Activated T-helper 1 cell treated with anti-CD3 and anti-CD28 coated beads, Interleukin-12 subunit alpha, Interleukin-12 subunit beta, Interleukin-2, Interleukin-4 antibody, amounts not matched to agents 30 ng/mL and 10 ng/mL and 1 ng/mL, durations not matched to agents 14 hours and 24 hours and 36 hours (primary cell): ENCODE measurements at regions of chr22 and their contacts with region 1.

Region 1: DNA sequence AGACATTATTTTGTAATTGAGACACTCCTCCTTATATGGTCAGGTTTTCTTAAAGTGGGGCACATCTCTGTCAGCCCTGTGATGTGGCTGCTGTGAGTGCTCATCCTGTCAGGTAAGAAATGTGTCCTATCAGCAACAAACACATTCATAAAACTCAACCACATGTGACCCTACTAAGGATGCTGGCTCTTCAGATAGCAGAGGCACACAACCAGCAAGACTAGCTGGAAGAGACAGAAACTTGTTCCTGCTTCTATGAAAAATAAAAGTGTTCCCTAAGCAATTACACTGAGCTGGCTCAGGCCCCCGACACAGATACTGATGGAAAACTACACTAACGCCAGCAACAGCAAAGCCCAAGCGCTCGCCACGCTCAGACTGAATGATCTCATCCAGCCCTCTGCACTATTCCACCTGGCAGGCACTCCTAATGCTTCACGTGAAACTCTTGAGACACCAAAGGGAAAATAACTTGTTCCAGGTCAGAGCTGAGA is 49.8 kb upstream of the CYP2D6 start:
- DNase-seq: peak; percentile 32
- H3K4me3 Mint-ChIP-seq: peak overlapping the region; percentile 12
- H3K27ac Mint-ChIP-seq: peak overlapping the region; percentile 50
- H3K4me1 Mint-ChIP-seq: peaks cover 84% of the 10 kb centered on the region
- H3K27me3 Mint-ChIP-seq: no peaks in the 10 kb centered on the region

Region 2: DNA sequence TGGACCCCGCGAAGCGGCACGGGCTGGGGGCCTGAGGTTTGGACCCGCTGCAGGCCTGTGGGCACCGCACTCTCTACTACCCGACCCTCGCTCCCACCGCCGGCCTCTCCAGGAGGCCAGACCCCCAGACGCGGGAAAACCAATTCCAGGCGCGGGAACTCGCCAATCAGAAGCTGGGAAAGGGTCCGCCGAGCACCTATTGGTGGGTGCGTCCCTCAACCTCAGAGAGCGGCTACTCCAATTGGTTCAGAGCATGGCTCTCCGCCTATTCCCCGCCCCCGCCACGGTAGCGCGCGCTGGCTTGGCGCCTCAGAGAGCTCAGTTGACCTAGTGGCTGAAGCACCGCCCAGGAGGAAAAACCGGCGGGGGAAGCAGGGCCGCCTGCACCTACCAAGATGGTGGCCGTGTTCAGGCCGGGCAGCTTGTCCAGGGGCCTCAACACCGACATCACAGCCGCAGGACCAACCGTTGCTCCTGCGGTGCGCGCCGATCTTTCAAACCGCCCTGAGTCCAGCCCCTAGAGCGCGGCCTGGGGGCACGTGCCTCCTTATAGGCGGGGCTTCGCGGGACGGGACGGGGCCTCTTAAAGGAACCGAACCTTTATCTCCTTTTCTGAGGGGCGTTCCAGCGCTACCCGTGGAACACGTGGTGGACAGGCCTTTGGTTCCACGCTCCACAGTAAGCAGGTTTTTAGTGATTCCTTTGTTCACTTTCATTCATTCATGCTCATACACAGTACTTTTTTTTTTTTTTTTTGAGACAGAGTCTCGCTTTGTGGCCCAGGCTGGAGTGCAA is 233.6 kb before region 1 on chr22 and contains the start of gene CENPM:
- intact Hi-C with region 1: no loop called
- DNase-seq: peak; percentile 93
- H3K4me3 Mint-ChIP-seq: peak within 1 kb of the TSS; percentile 92
- H3K27ac Mint-ChIP-seq: peak within 1 kb of the TSS; percentile 93
- H3K4me1 Mint-ChIP-seq: peaks cover 47% of the 10 kb centered on the region
- H3K27me3 Mint-ChIP-seq: no peaks in the 10 kb centered on the region
- total RNA-seq, gene CENPM: 82.0 and 84.6 TPM in 2 replicates

Region 3: DNA sequence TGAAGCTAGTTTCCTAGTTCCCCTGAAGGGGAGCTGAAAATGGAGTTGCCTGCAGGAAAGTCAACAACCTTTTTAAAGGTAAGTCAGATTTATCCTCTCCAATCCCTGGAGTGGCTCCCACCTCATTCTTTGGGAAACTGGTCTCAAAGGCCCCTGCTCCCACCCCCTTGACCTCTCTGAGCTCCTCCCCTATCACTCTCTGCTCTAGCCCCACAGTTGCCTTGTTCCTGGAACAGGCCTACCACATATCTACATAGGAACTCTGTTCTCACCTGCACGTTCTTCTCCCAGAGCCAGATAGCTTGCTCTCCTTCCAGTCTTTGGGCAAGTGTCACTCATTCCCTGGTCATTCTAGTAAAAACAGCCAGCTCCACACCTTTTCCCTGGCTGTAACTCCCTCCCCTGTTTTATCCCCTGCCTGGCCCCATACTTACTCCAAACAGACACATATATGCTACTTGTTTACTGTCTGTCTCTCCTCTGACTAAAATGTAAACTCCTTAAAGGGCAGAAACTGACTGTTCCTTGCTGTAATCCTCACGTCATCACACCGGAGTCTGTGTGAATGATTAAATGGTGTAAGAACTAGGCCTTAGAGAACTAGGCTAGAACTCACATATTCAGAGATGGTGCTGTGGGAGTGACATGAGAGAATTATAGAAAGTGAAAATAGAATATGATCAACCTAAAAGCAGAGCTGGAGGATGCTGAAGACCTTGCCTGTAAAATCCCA is 36.8 kb after region 1 on chr22:
- intact Hi-C with region 1: loop called (anchors 2 kb)
- DNase-seq: no peak
- H3K4me3 Mint-ChIP-seq: peak overlapping the region; percentile 2
- H3K27ac Mint-ChIP-seq: peak overlapping the region; percentile 90
- H3K4me1 Mint-ChIP-seq: peaks cover 29% of the 10 kb centered on the region
- H3K27me3 Mint-ChIP-seq: no peaks in the 10 kb centered on the region